Ascending aorta (tissue), 2 donors: ENCODE measurements at regions of chr22 and their contacts with region 1.

Region 1: DNA sequence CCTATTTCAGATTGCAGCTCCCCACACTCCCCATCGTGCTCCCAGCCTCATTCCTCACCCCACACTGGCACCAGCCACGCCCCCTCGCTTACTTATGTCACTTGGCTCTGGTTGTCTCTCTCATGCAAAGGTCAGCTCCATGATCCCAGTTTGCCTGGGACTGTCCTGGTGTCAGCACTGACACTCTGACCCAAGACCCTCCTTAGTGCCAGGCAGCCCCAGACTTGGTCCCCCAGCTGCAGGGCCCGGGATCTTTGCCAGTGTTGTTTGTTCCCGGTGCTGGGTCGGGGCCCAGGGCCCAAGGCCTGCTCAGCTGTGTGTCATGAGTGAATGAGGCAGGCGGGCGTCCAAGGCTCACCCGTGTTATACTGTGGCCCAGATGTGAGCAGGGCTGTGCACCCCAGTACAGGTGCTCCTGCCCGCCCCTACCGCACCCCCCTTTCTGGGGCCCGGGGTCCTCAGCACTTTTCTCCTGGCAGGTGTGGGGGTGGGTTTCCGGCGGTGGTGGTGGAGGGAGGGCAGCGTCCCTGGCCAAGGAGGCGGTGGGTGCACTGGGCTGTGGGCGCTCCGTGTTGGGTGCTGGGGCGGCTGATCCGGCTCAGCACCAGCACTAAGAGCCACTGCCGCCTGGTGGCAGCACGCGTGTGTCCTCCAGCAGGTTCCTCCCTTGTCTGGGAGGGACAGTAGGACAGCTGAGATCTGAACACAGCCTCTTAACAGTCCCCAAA is 19.5 kb downstream of the IL17REL start:
- DNase-seq: peak in 1 of 2 donors; percentile 62
- H3K4me3 ChIP-seq: no peak overlapping the region
- H3K27ac ChIP-seq: no peak overlapping the region
- H3K4me1 ChIP-seq: no peaks in the 10 kb centered on the region
- H3K27me3 ChIP-seq: no peaks in the 10 kb centered on the region
- CTCF ChIP-seq: peak; percentile 33 to 60 (median 51)

Region 2: GRCh38 chr22:49930739-49931412 is 62.2 kb before region 1 on chr22:
- intact Hi-C with region 1: loop called (anchors 1 kb)
- DNase-seq: peak; percentile 51 to 89
- H3K4me3 ChIP-seq: no peak overlapping the region
- H3K27ac ChIP-seq: no peak overlapping the region
- H3K4me1 ChIP-seq: peaks cover 8 to 27% of the 10 kb centered on the region in 2 donors
- H3K27me3 ChIP-seq: no peaks in the 10 kb centered on the region
- CTCF ChIP-seq: peak; percentile 55 to 72 (median 57)